ENCODE measurements at regions of chr17 and their contacts with region 1.

Region 1: GRCh38 chr17:72556944-72557826 is 436.4 kb downstream of the SOX9 start:
- DNase-seq: peak; percentile 85
- ATAC-seq: peak; percentile 82
- H3K4me3 Mint-ChIP-seq: no peak overlapping the region
- H3K27ac Mint-ChIP-seq: no peak overlapping the region
- H3K4me1 Mint-ChIP-seq: peaks cover 6% of the 10 kb centered on the region
- H3K27me3 Mint-ChIP-seq: no peaks in the 10 kb centered on the region
- CTCF ChIP-seq: peak; percentile 88

Region 2: GRCh38 chr17:72592242-72592966 is 35.2 kb after region 1 on chr17:
- CTCF ChIA-PET with region 1: interaction called, 28 read pairs
- POLR2A ChIA-PET with region 1: no interaction called
- DNase-seq: peak; percentile 81
- ATAC-seq: peak; percentile 84
- H3K4me3 Mint-ChIP-seq: peak overlapping the region; percentile 84
- H3K27ac Mint-ChIP-seq: no peak overlapping the region
- H3K4me1 Mint-ChIP-seq: peaks cover 32% of the 10 kb centered on the region
- H3K27me3 Mint-ChIP-seq: peaks cover 53% of the 10 kb centered on the region
- CTCF ChIP-seq: no peak

Region 3: DNA sequence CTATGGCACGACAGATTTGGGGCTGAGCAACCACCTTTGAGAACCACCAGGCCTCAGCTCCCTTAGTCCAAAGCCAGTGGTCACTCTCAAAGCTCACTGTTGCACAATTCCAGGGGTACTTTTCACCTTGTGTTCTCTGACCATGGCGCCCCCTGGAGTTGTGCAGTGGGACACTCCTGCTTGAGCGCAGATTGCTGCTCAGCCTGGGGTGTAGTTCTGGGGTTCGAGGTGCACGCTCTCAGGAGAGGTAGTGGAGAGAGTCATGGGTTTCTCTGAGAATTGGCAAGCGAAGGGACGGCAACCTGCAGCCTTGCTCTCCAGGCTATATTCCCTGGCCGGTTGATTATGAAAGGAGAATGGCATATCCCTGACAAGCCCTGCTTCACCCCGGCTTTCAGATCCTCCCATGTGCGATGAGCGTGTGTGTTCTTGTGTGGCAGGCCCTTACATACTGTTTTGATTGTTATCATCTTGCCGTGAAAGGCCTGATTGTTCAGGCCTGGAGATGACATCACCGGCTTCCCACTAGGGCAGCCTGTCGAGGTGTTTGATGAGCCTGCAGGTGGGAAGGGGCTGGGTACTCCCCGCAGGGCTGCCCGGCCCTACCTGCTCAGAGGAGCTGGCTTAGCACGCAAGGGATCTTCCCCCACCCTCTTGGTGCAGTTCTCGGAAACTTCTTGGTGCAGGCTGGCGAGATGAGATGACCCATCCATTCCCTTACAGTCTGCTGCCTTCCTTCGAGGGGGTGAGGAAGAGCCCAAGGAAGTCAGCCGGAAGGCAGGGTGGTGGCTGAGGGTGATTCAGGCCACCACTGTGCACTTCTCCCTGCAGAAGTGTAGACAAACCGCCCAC is 104.1 kb after region 1 on chr17:
- CTCF ChIA-PET with region 1: interaction called, 32 read pairs
- POLR2A ChIA-PET with region 1: no interaction called
- DNase-seq: no peak
- ATAC-seq: 0 out of 2 replicates have a peak, but pooled peaks have one; percentile 23
- H3K4me3 Mint-ChIP-seq: no peak overlapping the region
- H3K27ac Mint-ChIP-seq: no peak overlapping the region
- H3K4me1 Mint-ChIP-seq: peaks cover 10% of the 10 kb centered on the region
- H3K27me3 Mint-ChIP-seq: no peaks in the 10 kb centered on the region
- CTCF ChIP-seq: no peak

Region 4: GRCh38 chr17:72711526-72712310 is 154.5 kb after region 1 on chr17:
- CTCF ChIA-PET with region 1: interaction called, 33 read pairs
- POLR2A ChIA-PET with region 1: no interaction called
- DNase-seq: no peak
- ATAC-seq: no peak
- H3K4me3 Mint-ChIP-seq: no peak overlapping the region
- H3K27ac Mint-ChIP-seq: no peak overlapping the region
- H3K4me1 Mint-ChIP-seq: no peaks in the 10 kb centered on the region
- H3K27me3 Mint-ChIP-seq: no peaks in the 10 kb centered on the region
- CTCF ChIP-seq: no peak

Region 5: GRCh38 chr17:72985881-72986720 is 428.9 kb after region 1 on chr17:
- CTCF ChIA-PET with region 1: interaction called, 14 read pairs
- POLR2A ChIA-PET with region 1: no interaction called
- DNase-seq: peak; percentile 78
- ATAC-seq: peak; percentile 97
- H3K4me3 Mint-ChIP-seq: no peak overlapping the region
- H3K27ac Mint-ChIP-seq: no peak overlapping the region
- H3K4me1 Mint-ChIP-seq: peaks cover 5% of the 10 kb centered on the region; the same call in 1 of the 2 replicates
- H3K27me3 Mint-ChIP-seq: no peaks in the 10 kb centered on the region
- CTCF ChIP-seq: peak; percentile 85

Measured in WTC11 (cell line).